ENCODE measurements at regions of chr17 and their contacts with region 1.

Region 1: GRCh38 chr17:66915204-66916096 is 49.1 kb upstream of the CACNG4 start:
- DNase-seq: peak; percentile 87
- H3K4me3 Mint-ChIP-seq: peak overlapping the region; percentile 1
- H3K27ac Mint-ChIP-seq: no peak overlapping the region
- H3K4me1 Mint-ChIP-seq: peaks cover 16% of the 10 kb centered on the region
- H3K27me3 Mint-ChIP-seq: no peaks in the 10 kb centered on the region
- CTCF ChIP-seq: peak; percentile 61

Region 2: GRCh38 chr17:66951935-66952662 is 36.6 kb after region 1 on chr17:
- CTCF ChIA-PET with region 1: interaction called, 14 read pairs
- intact Hi-C with region 1: loop called (anchors 5 kb)
- DNase-seq: peak; percentile 94
- H3K4me3 Mint-ChIP-seq: peak overlapping the region; percentile 57
- H3K27ac Mint-ChIP-seq: peak overlapping the region; percentile 92
- H3K4me1 Mint-ChIP-seq: peaks cover 51% of the 10 kb centered on the region
- H3K27me3 Mint-ChIP-seq: no peaks in the 10 kb centered on the region
- CTCF ChIP-seq: no peak

Region 3: DNA sequence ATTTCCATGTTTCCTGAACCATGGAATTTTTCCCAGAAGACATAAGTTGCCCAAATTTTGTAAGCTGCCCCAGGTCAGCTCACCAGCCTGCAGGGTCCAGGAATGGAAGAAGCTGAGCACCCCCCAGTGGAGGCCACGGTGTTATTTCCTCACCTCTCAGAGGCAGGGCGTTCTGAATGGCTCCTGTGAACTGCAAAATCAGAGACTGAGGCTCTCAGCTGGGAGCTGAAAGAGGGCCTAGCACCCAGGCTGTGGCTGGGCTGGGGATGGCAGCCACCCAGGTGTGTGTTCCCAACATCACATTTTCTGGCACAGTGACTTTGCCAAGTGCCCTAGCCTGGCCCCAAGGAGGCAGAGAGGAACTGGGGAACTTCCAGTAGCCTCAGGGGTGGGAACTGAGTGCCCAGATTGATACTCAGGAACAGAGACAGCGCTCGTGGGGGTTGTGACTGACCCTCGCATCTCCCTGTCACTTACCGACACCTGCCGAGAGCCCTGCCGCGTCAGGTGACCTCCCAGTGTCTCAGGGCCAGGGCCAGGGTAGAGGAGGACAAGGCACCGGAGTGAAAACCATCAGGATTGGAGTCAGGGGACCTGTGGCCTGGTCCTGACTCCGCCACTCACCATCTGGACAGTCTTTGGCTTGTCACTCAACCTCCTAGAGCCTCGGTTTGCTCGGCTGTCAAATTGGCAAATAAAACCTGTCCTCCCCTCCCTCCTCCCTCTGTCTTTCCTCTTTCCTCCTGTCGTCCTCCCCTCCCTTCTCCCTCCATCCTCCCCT is 60.3 kb after region 1 on chr17:
- CTCF ChIA-PET with region 1: interaction called, 51 read pairs
- intact Hi-C with region 1: loop called (anchors 1 kb)
- DNase-seq: peak; percentile 77
- H3K4me3 Mint-ChIP-seq: no peak overlapping the region
- H3K27ac Mint-ChIP-seq: no peak overlapping the region
- H3K4me1 Mint-ChIP-seq: no peaks in the 10 kb centered on the region
- H3K27me3 Mint-ChIP-seq: peaks cover 12% of the 10 kb centered on the region
- CTCF ChIP-seq: no peak

Region 4: DNA sequence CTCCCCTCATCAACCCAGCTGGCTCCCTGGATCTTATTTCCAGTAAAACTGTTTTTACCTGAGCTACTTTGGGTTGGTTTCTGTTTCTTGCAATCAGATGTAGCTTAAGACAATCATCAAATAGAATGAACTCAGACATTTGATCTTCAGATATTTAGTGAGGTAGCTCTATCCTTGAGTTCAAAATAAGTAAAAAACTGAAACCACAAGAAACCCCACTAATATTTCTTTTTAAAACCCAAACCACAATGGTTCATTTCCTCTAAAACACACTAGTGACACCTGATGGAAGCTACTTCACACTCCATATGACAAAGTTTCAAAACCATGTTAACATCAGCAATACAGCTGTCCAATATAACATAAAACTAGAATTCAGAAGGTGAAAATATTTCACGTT is 166.7 kb after region 1 on chr17:
- CTCF ChIA-PET with region 1: interaction called, 7 read pairs
- intact Hi-C with region 1: loop called (anchors 1 kb)
- DNase-seq: no peak
- H3K4me3 Mint-ChIP-seq: no peak overlapping the region
- H3K27ac Mint-ChIP-seq: no peak overlapping the region
- H3K4me1 Mint-ChIP-seq: no peaks in the 10 kb centered on the region
- H3K27me3 Mint-ChIP-seq: no peaks in the 10 kb centered on the region
- CTCF ChIP-seq: no peak

Region 5: GRCh38 chr17:67157732-67158639 is 242.5 kb after region 1 on chr17:
- CTCF ChIA-PET with region 1: no interaction called
- intact Hi-C with region 1: loop called (anchors 1 kb)
- DNase-seq: no peak
- H3K4me3 Mint-ChIP-seq: no peak overlapping the region
- H3K27ac Mint-ChIP-seq: no peak overlapping the region
- H3K4me1 Mint-ChIP-seq: peaks cover 8% of the 10 kb centered on the region
- H3K27me3 Mint-ChIP-seq: no peaks in the 10 kb centered on the region
- CTCF ChIP-seq: no peak

Measured in Calu3 (cell line).